ENCODE measurements at regions of chr9 and their contacts with region 1.

Region 1: DNA sequence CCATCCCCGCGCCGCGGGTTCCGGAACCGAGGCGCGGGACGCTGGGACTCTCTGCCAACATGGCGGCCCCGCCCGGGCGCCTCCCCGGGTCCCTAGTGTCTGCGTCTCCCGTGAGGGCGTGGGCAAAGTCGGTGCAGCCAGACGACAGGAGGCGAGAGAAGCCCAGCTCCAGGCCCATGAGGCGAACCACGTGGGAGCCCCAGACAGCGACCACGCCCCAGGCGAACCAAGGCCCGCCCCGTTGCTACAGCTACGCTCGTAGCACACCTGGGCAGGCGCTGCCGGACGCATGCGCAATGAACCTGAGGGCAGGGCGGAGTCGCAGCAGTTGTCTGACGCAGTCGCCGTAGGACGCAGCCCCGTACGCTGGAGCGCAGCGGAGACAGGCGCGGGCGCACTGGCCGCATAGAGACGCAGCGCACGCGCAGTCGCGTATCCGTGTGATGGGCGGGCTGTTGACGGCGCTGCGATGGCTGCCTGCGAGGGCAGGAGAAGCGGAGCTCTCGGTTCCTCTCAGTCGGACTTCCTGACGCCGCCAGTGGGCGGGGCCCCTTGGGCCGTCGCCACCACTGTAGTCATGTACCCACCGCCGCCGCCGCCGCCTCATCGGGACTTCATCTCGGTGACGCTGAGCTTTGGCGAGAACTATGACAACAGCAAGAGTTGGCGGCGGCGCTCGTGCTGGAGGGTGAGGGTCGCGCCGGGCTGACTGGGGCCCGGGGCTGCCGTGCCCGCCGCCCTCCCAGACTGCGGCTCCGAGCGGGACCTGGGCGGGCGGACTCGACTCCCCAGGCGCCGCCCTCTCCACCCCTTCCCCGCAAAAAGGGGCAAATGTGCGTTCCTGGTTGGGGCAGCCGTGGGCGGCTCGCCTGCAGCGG is at the start of gene MAN1B1:
- DNase-seq: peak; percentile 99
- H3K4me3 ChIP-seq: peak within 1 kb of the TSS; percentile 77 to 85 (median 85)
- H3K27ac ChIP-seq: peak within 1 kb of the TSS; percentile 91 to 94
- H3K4me1 ChIP-seq: peaks cover 3 to 14% of the 10 kb centered on the region in 2 donors
- H3K27me3 ChIP-seq: no peaks in the 10 kb centered on the region
- CTCF ChIP-seq: peak in 1 of 3 donors; percentile 3
- POLR2A ChIP-seq: peak; percentile 33
- total RNA-seq, gene MAN1B1: 50.1 to 62.8 (median 50.8) TPM

Region 2: DNA sequence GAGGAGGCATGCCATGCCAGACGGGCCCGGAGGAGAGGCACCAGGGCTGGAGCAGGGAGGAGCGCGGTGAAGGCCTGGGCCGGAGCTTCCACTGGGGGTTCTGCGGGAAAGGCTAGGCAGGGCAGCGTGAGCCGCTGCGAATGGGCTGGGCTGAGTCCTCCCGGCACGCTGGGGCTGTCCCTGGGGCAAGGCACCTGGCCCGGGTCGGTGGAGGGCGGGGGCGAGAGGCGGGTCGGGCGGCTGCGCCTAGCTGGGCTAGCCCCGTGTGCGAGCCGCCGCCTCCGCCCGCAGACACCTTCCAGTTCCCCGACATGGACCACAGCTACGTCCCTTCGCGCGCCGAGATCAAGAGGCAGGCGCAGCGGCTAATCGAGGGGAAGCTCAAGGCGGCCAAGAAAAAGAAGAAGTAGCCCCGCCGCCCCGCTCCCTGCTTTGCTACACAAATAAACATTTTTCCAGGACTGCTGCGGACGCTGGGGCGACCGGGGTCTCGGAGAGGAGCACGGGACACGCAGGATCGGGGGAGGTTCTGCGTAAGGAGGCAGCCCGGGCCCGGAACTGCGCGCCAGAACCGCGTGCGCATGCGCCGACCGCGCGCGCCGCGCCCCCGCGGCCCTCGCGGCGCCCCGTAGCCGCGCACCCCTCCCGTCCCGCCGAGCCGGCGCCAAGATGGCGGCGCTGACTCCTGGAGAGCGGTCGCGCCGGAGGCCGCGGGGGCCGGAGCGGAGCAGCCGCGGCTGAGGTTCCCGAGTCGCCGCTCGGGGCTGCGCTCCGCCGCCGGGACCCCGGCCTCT is 279.3 kb before region 1 on chr9 and contains the start of gene RABL6:
- intact Hi-C with region 1: loop called (anchors 5 kb)
- DNase-seq: peak; percentile 59 to 65
- H3K4me3 ChIP-seq: peak within 1 kb of the TSS; percentile 94 to 100 (median 99)
- H3K27ac ChIP-seq: peak within 1 kb of the TSS; percentile 84 to 96
- H3K4me1 ChIP-seq: peaks cover 7 to 26% of the 10 kb centered on the region in 2 donors
- H3K27me3 ChIP-seq: no peaks in the 10 kb centered on the region
- CTCF ChIP-seq: peak in 1 of 3 donors; percentile 16
- POLR2A ChIP-seq: no peak
- total RNA-seq, gene RABL6: 38.2 to 51.5 (median 41.3) TPM

Measured in breast epithelium (tissue), 4 donors.